Gastrocnemius medialis (tissue), 4 donors: ENCODE measurements at regions of chr3 and their contacts with region 1.

Region 1: DNA sequence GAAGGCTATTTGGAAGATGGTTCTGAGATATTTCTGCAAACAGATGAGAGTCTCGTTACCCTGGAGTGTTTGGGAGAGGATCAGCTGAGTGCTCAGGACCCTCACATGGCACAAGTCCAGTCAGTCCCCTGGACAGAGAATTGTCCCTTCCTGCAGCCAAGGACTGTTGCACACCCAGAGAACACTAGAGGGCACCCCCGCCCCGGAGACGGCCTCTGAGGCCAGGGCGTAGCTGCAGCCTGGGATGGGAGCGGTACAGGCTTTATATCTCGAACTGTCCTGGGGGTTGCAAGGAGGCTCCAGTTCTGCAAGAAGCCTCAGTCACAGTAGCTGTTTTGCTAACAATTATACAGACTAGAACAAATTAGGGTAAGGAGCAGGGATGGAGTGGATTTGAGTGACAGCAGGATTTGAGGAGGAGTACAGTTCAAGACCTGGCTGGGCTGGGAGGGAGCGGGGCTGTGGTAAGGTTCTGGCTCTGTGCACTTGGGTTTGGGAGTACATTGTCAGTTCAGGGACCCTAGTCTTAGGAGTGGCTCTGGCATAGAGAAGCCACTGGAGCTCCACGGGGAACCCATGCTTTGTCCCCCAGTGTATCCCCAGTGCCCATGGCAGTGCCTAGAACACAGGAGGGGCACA is 67.6 kb upstream of the HACD2 start:
- DNase-seq: peak; percentile 48 to 50
- ATAC-seq: peak; percentile 65 to 66
- H3K4me3 ChIP-seq: no peak overlapping the region
- H3K27ac ChIP-seq: peak overlapping the region; percentile 37 to 76 (median 43)
- H3K4me1 ChIP-seq: peaks cover 17 to 21% of the 10 kb centered on the region in 2 donors
- H3K27me3 ChIP-seq: no peaks in the 10 kb centered on the region
- CTCF ChIP-seq: peak; percentile 61 to 89 (median 80)
- POLR2A ChIP-seq: no peak

Region 2: DNA sequence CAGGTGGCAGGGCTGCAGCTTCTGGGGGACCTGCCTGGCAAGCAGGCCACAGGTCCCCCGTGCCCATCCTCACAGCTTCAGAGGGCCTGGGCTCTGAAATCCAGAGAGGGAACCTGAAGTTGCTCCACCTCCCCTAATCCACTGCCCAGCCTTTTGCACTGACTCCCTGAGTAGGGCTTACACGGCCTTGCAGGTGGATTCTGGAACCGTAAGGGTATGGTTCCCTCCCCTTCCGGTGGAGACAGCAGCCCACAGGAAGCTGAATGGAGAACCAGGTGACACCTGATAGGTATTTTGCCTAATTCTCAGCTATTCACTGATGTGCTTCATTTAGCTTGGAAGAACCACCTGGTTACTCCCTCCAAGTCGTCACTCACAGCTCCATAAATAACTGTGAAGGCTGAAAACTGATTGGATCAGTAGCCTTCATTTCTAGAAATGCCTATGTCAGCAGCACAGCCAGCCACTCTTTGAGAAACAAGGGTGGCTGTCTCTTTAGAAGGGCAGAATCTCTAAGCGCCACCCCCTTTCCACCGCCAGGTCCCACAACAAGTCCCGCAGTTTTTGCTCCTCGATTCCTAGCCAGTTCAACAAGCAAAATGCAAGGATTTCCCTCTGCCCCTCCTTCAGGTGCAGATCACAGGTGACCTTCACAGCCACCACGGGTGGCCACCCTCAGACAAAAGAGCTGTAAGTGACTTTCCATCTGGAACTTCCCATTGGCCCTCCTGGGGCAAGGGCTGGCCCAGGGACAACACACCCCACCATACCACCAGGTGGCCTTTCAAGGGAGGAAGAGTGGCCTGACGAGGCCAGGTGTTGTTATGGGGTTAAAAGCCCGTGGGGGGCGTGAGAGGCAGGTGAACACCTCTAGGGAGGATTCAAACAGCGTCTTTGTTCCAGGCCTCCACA is 337.9 kb before region 1 on chr3:
- in situ Hi-C with region 1: no loop called
- intact Hi-C with region 1: no loop called
- DNase-seq: no peak
- ATAC-seq: no peak
- H3K4me3 ChIP-seq: no peak overlapping the region
- H3K27ac ChIP-seq: no peak overlapping the region
- H3K4me1 ChIP-seq: no peaks in the 10 kb centered on the region
- H3K27me3 ChIP-seq: peaks cover 0 to 3% (median 0%) of the 10 kb centered on the region in 3 donors
- CTCF ChIP-seq: no peak
- POLR2A ChIP-seq: no peak

Region 3: GRCh38 chr3:123702720-123703119 is 50.3 kb after region 1 on chr3:
- in situ Hi-C with region 1: no loop called
- intact Hi-C with region 1: loop called (anchors 1 kb)
- DNase-seq: no peak
- ATAC-seq: no peak
- H3K4me3 ChIP-seq: no peak overlapping the region
- H3K27ac ChIP-seq: no peak overlapping the region
- H3K4me1 ChIP-seq: no peaks in the 10 kb centered on the region
- H3K27me3 ChIP-seq: no peaks in the 10 kb centered on the region
- CTCF ChIP-seq: no peak
- POLR2A ChIP-seq: no peak

Region 4: DNA sequence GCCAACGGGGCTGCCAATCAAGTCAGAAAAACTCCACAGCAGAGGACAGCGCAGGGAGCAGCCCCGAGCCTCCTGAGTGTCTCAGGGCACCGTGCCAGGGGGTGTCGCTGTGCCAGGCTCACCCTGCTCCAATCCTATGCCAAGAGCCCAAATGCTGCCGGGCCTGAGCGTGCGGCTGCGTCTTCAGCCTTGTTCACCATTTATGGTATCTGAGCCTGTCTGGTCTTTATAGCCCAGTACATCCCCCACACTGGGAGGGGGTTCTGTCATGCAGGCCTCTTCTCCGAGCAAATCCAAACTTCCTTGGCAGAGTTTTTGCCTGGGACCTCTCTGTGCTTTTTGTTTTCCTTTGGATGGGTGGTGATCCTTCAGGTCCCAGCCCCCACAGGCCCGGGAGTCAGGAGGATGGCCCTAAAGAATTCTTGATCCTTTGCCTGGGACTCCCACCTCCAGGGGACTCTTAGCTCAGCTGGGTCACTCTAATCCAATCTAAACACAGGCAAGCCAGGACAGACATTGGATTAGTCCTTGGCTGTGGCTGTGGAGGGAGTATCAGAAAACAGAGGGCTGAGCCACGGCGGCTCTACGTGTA is 67.5 kb after region 1 on chr3:
- in situ Hi-C with region 1: loop called (anchors 5 to 10 kb)
- intact Hi-C with region 1: loop called (anchors 1 kb)
- DNase-seq: no peak
- ATAC-seq: no peak
- H3K4me3 ChIP-seq: no peak overlapping the region
- H3K27ac ChIP-seq: peak overlapping the region in 1 of 4 donors; percentile 46
- H3K4me1 ChIP-seq: peaks cover 0 to 3% of the 10 kb centered on the region in 2 donors
- H3K27me3 ChIP-seq: no peaks in the 10 kb centered on the region
- CTCF ChIP-seq: no peak
- POLR2A ChIP-seq: no peak

Region 5: GRCh38 chr3:123725652-123726400 is 73.4 kb after region 1 on chr3:
- in situ Hi-C with region 1: loop called in 1 of 4 experiments (anchors 5 kb)
- intact Hi-C with region 1: no loop called
- DNase-seq: no peak
- ATAC-seq: no peak
- H3K4me3 ChIP-seq: no peak overlapping the region
- H3K27ac ChIP-seq: no peak overlapping the region
- H3K4me1 ChIP-seq: no peaks in the 10 kb centered on the region
- H3K27me3 ChIP-seq: no peaks in the 10 kb centered on the region
- CTCF ChIP-seq: no peak
- POLR2A ChIP-seq: no peak

Region 6: GRCh38 chr3:123986427-123986826 is 334.0 kb after region 1 on chr3:
- in situ Hi-C with region 1: no loop called
- intact Hi-C with region 1: loop called (anchors 10 kb)
- DNase-seq: no peak
- ATAC-seq: no peak
- H3K4me3 ChIP-seq: no peak overlapping the region
- H3K27ac ChIP-seq: no peak overlapping the region
- H3K4me1 ChIP-seq: no peaks in the 10 kb centered on the region
- H3K27me3 ChIP-seq: peaks cover 0 to 3% (median 2%) of the 10 kb centered on the region in 3 donors
- CTCF ChIP-seq: no peak
- POLR2A ChIP-seq: no peak